Transverse colon (tissue), 4 donors: ENCODE measurements at regions of chr10 and their contacts with region 1.

Region 1: DNA sequence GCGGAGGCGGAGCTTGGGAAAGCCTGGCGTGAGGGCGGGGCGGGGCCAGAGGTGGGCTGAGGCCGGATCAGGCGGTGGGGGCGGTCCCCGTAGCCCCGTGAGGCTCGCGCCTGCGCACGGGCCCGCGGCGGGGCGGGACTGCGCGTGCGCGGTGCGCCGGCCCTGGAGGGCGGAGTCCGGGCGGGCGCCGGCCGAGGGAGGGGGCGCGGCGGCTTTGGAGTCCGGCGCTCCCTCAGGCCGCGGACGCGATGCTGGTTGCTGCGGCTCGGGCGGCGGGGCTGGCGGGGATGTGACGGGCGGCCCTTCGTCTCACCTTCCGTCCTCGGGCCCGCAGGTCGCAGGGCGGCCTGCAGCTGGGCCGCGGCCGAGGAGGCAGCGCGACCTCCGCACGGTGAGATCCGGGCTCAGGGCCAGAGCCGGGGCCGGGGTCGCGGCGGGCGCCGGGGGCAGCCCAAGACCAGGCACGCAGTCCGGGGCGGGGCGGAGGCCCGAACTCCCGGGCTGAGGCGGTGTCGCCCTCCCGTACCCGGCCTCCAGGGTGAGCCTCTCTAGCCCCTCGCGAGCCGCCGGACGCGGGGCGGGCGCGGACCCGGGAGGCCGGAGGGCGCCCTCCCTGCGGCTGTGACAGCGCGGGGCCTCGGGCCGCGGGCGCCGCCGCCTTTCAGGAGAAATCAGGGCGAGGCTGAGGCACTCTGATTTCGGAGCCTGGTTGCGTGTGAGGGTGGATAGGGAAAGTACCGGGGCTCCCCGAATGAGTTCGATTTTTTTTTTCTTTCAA is at the start of gene CCSER2:
- DNase-seq: peak; percentile 99
- H3K4me3 ChIP-seq: peak within 1 kb of the TSS; percentile 70 to 99 (median 88)
- H3K27ac ChIP-seq: peak within 1 kb of the TSS; percentile 94 to 99 (median 98)
- H3K4me1 ChIP-seq: peaks cover 10 to 33% (median 26%) of the 10 kb centered on the region in 4 donors
- H3K27me3 ChIP-seq: no peaks in the 10 kb centered on the region
- CTCF ChIP-seq: no peak
- EP300 ChIP-seq: no peak
- POLR2A ChIP-seq: peak; percentile 35
- total RNA-seq, gene CCSER2: 20.9 to 45.6 (median 33.7) TPM

Region 2: DNA sequence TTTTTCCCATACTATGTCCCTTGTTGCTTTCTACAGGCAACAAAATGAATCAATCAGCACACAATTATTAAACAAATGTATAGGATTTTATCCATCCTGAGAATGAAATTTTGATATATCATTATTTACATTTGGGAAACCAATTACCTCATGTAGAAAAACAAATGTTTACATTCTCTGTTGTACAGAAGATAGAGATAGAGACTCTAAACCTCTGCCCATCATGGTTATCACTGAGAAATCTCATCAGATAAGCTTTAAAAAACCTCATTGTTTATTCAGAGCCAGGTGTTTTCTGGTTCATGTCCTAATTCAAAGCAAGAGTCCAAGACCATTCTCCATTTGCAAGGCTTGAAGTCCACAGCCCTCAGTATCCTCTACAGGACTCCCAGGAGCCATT is 556.9 kb before region 1 on chr10:
- in situ Hi-C with region 1: no loop called
- intact Hi-C with region 1: no loop called
- DNase-seq: no peak
- H3K4me3 ChIP-seq: no peak overlapping the region
- H3K27ac ChIP-seq: no peak overlapping the region
- H3K4me1 ChIP-seq: no peaks in the 10 kb centered on the region
- H3K27me3 ChIP-seq: no peaks in the 10 kb centered on the region
- CTCF ChIP-seq: no peak
- EP300 ChIP-seq: no peak
- POLR2A ChIP-seq: no peak

Region 3: GRCh38 chr10:84139126-84140035 is 189.2 kb before region 1 on chr10 and contains the start of gene GHITM:
- in situ Hi-C with region 1: loop called in 1 of 4 experiments (anchors 25 kb)
- intact Hi-C with region 1: no loop called
- DNase-seq: peak; percentile 100
- H3K4me3 ChIP-seq: peak within 1 kb of the TSS; percentile 68 to 95 (median 82)
- H3K27ac ChIP-seq: peak within 1 kb of the TSS; percentile 94 to 97 (median 97)
- H3K4me1 ChIP-seq: peaks cover 9 to 46% (median 29%) of the 10 kb centered on the region in 4 donors
- H3K27me3 ChIP-seq: no peaks in the 10 kb centered on the region
- CTCF ChIP-seq: peak; percentile 39 to 94 (median 50)
- EP300 ChIP-seq: peak; percentile 17
- POLR2A ChIP-seq: peak; percentile 98
- total RNA-seq, gene GHITM: 134 to 351 (median 225) TPM

Region 4: DNA sequence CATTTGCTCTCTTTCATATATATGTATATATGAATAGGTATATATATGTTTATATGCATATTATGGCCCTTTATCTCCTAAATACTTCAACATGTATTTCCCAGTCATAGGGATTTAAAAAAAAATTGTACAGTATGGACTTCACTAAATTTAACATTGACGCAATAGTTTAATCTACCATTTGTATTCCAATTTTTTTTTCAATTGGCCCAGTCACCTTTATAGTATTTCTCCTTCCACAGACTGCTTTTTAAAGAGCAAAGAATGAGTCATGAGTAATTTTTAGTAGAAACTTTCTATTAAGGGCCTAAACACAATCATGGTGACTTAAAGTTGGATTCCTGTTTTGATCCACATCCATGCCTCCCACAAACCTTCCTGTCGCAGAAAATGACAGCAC is 20.3 kb after region 1 on chr10:
- in situ Hi-C with region 1: no loop called
- intact Hi-C with region 1: no loop called
- DNase-seq: no peak
- H3K4me3 ChIP-seq: no peak overlapping the region
- H3K27ac ChIP-seq: peak overlapping the region; percentile 2 to 45 (median 17)
- H3K4me1 ChIP-seq: peaks cover 0 to 36% (median 13%) of the 10 kb centered on the region in 4 donors
- H3K27me3 ChIP-seq: no peaks in the 10 kb centered on the region
- CTCF ChIP-seq: no peak
- EP300 ChIP-seq: no peak
- POLR2A ChIP-seq: no peak